Head of caudate nucleus (tissue), 42 donors: ENCODE measurements at regions of chr12 and their contacts with region 1.

Region 1: GRCh38 chr12:106760184-106760531 is 14.3 kb upstream of the RIC8B start:
- DNase-seq: peak in 17 of 42 donors; percentile 33 to 75 (median 50)

Region 2: DNA sequence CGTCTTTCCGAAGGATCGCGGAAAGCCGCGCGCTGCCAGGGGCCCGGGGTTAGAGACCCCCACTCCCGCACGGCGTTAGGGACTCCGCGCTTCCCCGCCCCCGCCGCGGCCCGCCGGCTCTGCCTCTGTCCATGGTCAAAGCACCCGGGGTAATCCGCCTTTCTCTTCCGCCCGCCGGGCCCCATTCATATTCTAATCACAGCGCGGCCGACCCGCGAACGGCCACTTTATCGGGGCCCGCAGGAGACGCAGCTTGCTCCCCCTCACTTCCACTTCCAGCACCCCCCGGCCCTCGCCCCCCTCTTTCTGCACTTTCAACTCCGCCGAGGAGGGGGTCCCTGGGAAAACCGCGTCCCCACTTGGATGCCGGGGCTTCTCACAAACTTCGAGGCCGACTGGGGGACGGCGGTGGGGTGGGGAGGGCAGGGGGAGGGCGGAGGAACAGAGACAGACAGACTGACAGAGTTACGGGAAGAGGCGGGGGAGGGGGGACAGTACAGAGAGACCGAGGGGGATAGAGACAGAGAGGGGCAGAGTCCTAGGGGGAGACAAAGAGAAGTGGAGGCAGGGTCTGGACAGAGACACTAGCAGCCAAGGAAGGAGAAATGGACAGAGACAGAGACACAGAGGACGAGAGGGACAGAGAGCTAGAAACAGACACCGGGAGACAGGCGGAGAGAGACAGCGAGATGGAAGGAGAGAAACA is 178.5 kb before region 1 on chr12:
- intact Hi-C with region 1: loop called (anchors 10 kb)
- DNase-seq: peak in 17 of 42 donors; percentile 12 to 64 (median 35)